Heart right ventricle (tissue), 16 donors: ENCODE measurements at regions of chr20 and their contacts with region 1.

Region 1: DNA sequence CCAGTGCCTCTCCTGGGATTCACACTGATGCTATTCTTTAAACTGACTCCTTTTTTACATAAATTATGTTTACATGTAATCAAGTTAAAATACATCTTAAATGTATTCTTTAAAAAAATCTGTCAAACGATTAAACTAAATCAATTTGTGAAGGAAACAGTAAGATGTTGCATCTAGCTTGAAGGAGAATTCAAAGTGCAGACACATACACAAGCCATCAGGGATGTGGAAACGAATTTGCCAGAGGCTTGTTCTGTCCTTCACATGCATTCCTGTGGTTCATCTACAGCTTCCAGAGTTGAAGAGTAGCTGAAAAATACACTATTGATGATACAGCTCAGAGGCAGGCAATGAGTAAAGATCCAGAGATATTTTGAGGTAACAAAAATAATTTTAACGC is 7.3 kb upstream of the BPIFB3 start:
- DNase-seq: no peak
- ATAC-seq: no peak
- H3K4me3 ChIP-seq: no peak overlapping the region
- H3K27ac ChIP-seq: no peak overlapping the region
- H3K4me1 ChIP-seq: no peaks in the 10 kb centered on the region
- H3K27me3 ChIP-seq: no peaks in the 10 kb centered on the region
- CTCF ChIP-seq: no peak

Region 2: DNA sequence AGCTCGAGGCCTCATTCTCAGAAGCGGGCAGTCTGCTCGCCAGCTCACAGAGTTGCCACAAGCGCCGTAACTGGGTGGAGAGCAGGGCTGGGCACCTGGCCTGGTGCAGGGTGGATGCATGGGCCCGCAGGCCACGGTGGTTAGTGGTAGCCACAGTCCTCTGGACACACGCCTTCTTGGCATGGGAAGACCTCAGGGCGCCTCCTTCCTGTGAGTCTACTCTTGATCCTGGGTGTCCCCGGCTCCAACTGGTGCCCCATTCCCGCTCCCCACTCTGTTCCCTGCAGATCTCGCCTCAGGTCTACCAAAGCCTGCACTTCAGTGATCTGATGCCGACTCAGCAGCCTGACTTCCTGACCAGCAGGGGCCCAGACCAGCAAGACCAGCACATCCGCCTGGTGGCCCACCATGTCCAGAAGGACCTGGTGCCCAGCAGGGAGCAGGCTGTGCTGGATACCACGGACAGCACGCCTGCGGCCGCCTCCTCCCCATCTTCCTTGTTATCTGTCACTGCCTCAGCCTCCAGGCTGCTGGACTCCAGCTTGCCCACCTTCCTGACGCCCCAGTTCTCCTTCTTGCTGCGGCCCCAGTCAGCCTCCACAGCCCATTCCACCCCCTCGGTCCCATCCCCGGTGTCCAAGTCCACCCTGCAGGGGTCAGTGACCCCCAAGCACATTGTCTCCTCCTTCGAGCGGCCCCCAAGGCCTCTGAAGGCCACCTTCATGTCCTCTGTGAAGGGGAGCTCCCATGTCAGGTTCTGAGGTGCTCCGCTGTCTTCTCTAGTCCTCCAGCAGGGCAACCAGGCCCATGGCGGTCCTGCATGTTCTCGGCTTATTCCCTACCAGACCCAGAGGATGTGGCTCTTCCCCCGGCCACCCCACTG is 85.3 kb before region 1 on chr20:
- intact Hi-C with region 1: no loop called
- DNase-seq: no peak
- ATAC-seq: peak in 1 of 8 donors; percentile 16
- H3K4me3 ChIP-seq: no peak overlapping the region
- H3K27ac ChIP-seq: no peak overlapping the region
- H3K4me1 ChIP-seq: peaks cover 0 to 5% (median 0%) of the 10 kb centered on the region in 9 donors
- H3K27me3 ChIP-seq: peaks cover 0 to 12% (median 0%) of the 10 kb centered on the region in 7 donors
- CTCF ChIP-seq: no peak

Region 3: DNA sequence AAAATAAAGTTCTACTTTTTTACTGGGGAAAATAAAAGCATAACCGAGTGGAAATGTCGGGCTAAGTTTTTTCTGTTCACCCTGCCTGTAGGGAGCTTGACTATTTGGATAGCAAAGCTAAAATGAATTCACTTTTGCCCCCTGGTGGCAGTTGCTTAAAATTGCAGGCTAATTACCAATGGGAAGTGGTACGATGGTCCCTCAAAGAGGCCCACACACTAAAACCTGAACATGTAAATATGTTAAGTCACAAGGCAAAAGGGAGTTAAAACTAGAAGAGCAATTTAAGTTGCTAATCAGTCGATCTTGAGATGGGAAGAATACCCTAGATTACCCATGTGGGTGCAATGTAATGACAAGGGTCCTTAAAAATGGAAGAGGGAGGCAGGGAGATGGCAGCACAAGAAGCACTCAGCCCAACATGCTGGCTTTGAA is 41.3 kb before region 1 on chr20:
- intact Hi-C with region 1: loop called in 1 of 10 experiments (anchors 2 kb)
- DNase-seq: no peak
- ATAC-seq: no peak
- H3K4me3 ChIP-seq: no peak overlapping the region
- H3K27ac ChIP-seq: no peak overlapping the region
- H3K4me1 ChIP-seq: no peaks in the 10 kb centered on the region
- H3K27me3 ChIP-seq: no peaks in the 10 kb centered on the region
- CTCF ChIP-seq: peak in 2 of 9 donors; percentile 36 to 52

Region 4: DNA sequence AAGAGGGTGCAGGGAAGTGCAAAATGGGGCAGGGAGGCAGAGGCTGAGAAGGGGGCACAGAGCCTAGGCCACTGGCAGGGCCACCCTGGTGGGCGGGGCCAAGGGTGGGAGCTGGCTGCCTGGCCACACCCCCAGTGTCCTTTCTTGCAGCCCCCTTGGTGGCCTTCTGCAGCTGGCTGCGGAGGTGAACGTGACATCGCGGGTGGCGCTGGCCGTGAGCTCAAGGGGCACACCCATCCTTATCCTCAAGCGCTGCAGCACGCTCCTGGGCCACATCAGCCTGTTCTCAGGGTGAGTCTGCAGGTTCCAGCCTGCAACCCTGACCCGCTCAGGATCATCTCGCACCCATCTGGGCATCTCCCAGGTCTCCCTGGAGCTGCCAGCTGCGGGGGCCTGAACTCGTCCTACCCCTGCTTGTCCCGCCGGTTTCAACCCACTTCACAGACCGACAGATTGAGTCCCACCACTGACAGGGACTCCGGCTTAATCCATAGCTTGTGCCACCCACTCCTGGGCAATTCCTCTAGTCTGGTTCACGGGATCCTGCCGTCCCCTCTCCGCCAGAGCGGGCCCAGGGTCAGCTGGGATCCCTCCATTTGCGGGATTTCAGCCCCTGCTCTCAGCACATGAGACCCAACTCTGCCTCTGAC is 13.5 kb after region 1 on chr20:
- intact Hi-C with region 1: loop called in 1 of 10 experiments (anchors 1 kb)
- DNase-seq: no peak
- ATAC-seq: no peak
- H3K4me3 ChIP-seq: no peak overlapping the region
- H3K27ac ChIP-seq: no peak overlapping the region
- H3K4me1 ChIP-seq: no peaks in the 10 kb centered on the region
- H3K27me3 ChIP-seq: peaks cover 0 to 5% (median 0%) of the 10 kb centered on the region in 7 donors
- CTCF ChIP-seq: no peak